Heart right ventricle (tissue), 16 donors: ENCODE measurements at regions of chr5 and their contacts with region 1.

Region 1: GRCh38 chr5:149114403-149115312 is 26.6 kb upstream of the ABLIM3 start:
- DNase-seq: peak in 1 of 2 donors; percentile 76
- ATAC-seq: peak; percentile 91 to 98 (median 95)
- H3K4me3 ChIP-seq: no peak overlapping the region
- H3K27ac ChIP-seq: peak overlapping the region in 6 of 10 donors; percentile 43 to 73 (median 59)
- H3K4me1 ChIP-seq: peaks cover 0 to 12% (median 6%) of the 10 kb centered on the region in 9 donors
- H3K27me3 ChIP-seq: no peaks in the 10 kb centered on the region
- CTCF ChIP-seq: peak; percentile 54 to 88 (median 75)

Region 2: DNA sequence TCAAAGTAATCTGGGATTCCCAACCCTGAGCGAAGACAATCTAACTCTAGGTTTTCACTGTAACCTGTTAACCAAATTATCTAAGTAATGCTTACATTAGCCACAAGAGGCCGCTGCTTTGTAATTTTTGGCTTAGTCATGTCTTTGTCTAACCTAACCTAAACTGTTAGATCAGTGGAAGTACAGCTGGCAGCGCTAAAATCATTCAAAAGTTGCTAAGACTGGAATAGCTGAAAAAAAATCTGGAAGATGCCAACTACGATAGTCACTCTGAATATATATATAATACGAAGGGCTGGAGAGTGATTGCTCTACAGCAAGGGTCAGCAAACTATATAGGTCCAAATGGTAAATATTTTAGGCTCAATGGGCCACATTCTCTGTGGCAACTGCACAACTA is 670.7 kb before region 1 on chr5:
- intact Hi-C with region 1: loop called in 2 of 10 experiments (anchors 10 kb)
- DNase-seq: peak in 1 of 2 donors; percentile 73
- ATAC-seq: peak; percentile 71 to 86 (median 80)
- H3K4me3 ChIP-seq: no peak overlapping the region
- H3K27ac ChIP-seq: peak overlapping the region in 2 of 10 donors; percentile 13 to 33
- H3K4me1 ChIP-seq: peaks cover 0 to 32% (median 3%) of the 10 kb centered on the region in 9 donors
- H3K27me3 ChIP-seq: no peaks in the 10 kb centered on the region
- CTCF ChIP-seq: peak; percentile 48 to 84 (median 77)

Region 3: DNA sequence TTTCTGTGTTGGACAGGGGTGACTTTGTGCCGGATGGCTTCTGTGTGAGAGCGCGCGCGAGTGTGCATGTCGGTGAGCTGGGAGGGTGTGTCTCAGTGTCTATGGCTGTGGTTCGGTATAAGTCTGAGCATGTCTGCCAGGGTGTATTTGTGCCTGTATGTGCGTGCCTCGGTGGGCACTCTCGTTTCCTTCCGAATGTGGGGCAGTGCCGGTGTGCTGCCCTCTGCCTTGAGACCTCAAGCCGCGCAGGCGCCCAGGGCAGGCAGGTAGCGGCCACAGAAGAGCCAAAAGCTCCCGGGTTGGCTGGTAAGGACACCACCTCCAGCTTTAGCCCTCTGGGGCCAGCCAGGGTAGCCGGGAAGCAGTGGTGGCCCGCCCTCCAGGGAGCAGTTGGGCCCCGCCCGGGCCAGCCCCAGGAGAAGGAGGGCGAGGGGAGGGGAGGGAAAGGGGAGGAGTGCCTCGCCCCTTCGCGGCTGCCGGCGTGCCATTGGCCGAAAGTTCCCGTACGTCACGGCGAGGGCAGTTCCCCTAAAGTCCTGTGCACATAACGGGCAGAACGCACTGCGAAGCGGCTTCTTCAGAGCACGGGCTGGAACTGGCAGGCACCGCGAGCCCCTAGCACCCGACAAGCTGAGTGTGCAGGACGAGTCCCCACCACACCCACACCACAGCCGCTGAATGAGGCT is 288.5 kb before region 1 on chr5 and contains the start of gene ADRB2:
- intact Hi-C with region 1: loop called in 1 of 10 experiments (anchors 10 kb)
- DNase-seq: peak; percentile 94 to 96
- ATAC-seq: peak; percentile 94 to 99 (median 97)
- H3K4me3 ChIP-seq: peak within 1 kb of the TSS; percentile 47 to 76 (median 68)
- H3K27ac ChIP-seq: peak within 1 kb of the TSS; percentile 77 to 97 (median 94)
- H3K4me1 ChIP-seq: peaks cover 0 to 82% (median 31%) of the 10 kb centered on the region in 9 donors
- H3K27me3 ChIP-seq: no peaks in the 10 kb centered on the region
- CTCF ChIP-seq: peak in 2 of 9 donors; percentile 4 to 17
- total RNA-seq, gene ADRB2: 3.5 to 7.8 (median 4.5) TPM

Region 4: GRCh38 chr5:149035372-149035790 is 79.3 kb before region 1 on chr5:
- intact Hi-C with region 1: loop called in 7 of 10 experiments (anchors 2 to 5 kb)
- DNase-seq: peak; percentile 70 to 81
- ATAC-seq: peak; percentile 83 to 94 (median 91)
- H3K4me3 ChIP-seq: no peak overlapping the region
- H3K27ac ChIP-seq: no peak overlapping the region
- H3K4me1 ChIP-seq: peaks cover 0 to 53% (median 25%) of the 10 kb centered on the region in 9 donors
- H3K27me3 ChIP-seq: no peaks in the 10 kb centered on the region
- CTCF ChIP-seq: peak; percentile 64 to 95 (median 90)

Region 5: DNA sequence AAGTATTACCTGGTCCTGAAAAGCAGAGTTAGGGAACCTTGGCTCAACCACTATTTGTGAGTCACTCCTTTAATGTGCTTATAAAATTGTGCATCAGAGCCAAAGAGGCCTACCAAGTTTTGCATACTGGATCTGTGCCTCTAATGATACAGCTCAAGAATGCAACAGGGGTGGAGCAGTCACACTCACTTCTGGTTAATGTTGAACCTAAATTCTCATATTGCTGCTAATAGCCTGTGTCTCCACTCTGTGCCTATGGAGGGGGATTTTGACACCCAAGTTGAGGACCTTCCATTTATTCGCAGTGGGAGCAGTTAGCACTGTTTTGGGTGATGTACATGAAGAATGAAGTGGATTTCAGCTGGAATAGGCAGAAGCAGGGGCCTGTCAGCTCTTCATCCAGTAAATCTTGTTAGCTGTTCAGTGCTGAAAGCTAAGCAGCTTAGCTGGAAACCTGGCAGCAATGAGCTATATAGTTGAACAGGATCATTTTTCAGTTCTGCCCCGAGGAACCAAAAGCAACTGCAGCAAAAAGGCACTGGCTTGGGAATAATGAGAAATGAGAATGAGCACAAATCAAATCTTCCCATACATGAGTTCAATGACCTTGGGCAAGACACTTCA is 61.5 kb before region 1 on chr5:
- intact Hi-C with region 1: loop called in 1 of 10 experiments (anchors 5 kb)
- DNase-seq: no peak
- ATAC-seq: peak in 2 of 8 donors; percentile 27 to 33
- H3K4me3 ChIP-seq: no peak overlapping the region
- H3K27ac ChIP-seq: peak overlapping the region in 6 of 10 donors; percentile 28 to 39 (median 36)
- H3K4me1 ChIP-seq: peaks cover 0 to 13% (median 6%) of the 10 kb centered on the region in 9 donors
- H3K27me3 ChIP-seq: no peaks in the 10 kb centered on the region
- CTCF ChIP-seq: no peak

Region 6: DNA sequence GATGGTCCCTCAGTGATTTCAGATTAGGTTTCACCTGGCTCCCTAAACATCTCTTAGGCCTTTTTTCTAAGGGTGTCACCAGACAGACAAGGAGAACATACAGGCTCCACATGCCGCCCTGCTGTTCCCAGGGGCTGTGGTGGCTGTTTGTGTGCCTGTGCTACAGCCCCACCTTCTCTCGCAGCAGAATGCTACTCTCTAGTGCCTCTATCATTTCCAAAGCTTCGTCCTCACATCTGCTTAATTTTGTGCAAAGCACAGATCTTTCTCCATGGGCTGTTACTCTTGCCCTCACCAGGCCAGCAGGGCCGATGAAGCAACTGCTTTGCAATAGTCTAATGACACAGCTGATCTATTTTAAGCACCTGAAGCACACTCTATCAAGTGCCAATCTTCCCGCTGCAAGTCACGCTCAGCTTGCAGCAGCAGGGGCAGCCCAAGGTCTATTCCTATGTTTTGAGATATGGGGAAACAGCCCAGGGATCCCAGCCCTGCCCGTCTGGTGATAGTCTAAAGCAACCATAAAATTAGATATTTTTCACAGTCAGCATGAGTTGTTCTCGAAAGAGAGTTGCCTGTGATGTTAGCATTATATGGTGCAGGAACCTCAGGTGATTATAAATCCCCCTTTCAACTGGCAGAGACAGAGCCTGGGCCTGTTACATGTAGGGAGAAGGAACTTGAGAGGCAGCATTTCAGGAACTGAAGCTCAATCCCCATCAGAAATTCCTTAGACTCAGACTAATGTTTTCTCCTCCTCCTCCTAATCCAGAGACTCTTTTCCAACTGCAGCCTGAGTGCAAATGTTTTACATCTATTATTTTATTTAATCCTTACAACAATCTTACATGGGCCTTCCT is 39.3 kb after region 1 on chr5:
- intact Hi-C with region 1: no loop called
- DNase-seq: peak; percentile 55 to 71
- ATAC-seq: peak; percentile 54 to 89 (median 78)
- H3K4me3 ChIP-seq: no peak overlapping the region
- H3K27ac ChIP-seq: peak overlapping the region; percentile 64 to 94 (median 88)
- H3K4me1 ChIP-seq: peaks cover 18 to 100% (median 95%) of the 10 kb centered on the region in 9 donors
- H3K27me3 ChIP-seq: no peaks in the 10 kb centered on the region
- CTCF ChIP-seq: peak in 1 of 9 donors; percentile 17

Region 7: DNA sequence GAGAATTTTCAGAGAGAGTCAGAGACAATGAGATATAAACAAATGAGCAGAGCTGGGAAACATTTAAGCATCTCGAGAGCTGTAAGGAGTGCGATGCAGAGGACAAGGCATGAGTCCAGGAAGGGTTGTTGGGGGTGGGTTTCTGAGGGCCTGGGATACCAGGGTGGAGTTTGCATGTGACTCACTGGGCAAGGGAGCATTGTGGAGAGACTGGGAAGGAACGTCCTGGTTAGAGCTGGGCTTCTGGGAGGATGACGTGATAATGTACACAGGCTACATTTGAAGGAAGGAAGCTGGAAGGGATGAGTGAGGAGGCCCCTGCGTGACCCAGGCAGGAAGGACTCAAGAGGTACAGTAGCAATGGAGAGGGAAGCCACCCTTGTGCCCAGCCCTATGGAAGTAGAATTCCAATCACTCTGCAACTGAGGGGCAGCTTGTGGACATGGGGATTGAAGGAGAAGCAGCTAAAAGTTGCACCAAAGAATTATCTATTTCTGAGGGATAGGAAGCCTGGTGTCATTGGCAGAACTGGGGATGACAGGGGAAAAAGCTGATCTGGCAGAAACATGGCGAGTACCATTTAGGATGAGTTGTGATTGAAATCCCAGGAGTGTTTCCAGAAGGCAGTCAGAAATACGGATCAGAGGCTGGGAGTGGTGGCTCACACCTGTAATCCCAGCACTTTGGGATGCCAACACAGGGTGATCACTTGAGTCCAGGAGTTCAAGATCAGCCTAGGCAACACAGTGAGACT is 97.7 kb after region 1 on chr5:
- intact Hi-C with region 1: no loop called
- DNase-seq: no peak
- ATAC-seq: peak in 1 of 8 donors; percentile 19
- H3K4me3 ChIP-seq: no peak overlapping the region
- H3K27ac ChIP-seq: peak overlapping the region in 7 of 10 donors; percentile 7 to 45 (median 21)
- H3K4me1 ChIP-seq: peaks cover 0 to 55% (median 43%) of the 10 kb centered on the region in 9 donors
- H3K27me3 ChIP-seq: no peaks in the 10 kb centered on the region
- CTCF ChIP-seq: no peak

Region 8: DNA sequence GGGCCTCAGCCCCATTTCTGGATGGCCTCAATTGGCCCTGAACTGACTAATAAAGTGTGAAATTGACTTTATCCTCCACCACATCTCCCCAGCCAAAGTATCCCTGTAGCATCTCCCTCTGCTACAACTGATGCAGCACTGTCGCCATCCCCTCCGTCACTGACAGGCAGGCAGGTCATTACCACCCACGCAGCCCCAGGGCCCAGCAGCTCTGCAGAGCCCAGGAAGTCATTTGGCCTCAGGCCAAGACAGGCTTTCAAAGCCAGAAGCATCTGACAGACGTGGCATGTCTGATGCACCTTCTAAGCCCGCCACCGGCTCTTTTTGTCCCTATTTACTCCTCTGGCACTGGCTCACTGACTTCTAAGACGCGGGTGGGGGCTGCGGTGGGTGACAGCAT is 531.9 kb after region 1 on chr5:
- intact Hi-C with region 1: no loop called
- DNase-seq: peak in 1 of 2 donors; percentile 49
- ATAC-seq: peak in 7 of 8 donors; percentile 22 to 77 (median 54)
- H3K4me3 ChIP-seq: no peak overlapping the region
- H3K27ac ChIP-seq: no peak overlapping the region
- H3K4me1 ChIP-seq: peaks cover 0 to 9% (median 0%) of the 10 kb centered on the region in 9 donors
- H3K27me3 ChIP-seq: no peaks in the 10 kb centered on the region
- CTCF ChIP-seq: no peak